ENCODE measurements at regions of chr7 and their contacts with region 1.

Region 1: DNA sequence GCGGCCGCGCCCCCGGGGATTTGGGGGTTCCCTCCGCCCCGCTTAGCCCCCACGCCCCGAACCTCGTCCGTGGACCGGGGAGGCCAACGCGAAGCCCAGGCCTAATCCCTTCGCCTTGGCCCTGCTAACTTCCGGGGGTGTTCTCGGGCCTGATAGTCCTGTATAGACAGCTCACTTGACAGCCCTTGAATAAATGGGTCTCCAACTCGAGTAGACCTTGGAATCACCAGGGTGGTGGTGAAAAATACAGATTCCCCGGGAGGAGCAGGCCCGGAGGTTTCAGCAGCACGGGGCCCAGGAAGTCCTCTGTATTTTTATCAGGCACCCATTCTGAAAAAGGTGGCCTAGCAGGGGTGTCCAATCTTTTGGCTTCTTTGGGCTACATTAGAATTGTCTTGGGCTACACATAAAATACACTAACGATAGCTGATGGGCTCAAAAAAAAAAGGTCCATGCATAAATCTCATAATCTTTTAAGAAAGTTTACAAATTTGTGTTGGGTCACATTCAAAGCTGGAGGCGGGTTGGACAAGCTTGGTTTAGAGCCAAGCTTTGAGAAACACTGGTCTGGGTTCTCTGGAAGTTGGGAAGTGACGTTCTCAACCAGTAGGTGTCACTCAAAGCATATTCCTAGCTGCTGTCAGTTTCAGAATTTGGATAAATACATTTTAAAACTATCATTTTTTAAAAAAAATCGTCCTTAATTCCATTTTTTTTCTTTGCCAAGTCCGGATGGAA is 221.7 kb downstream of the PHTF2 start:
- DNase-seq: peak; percentile 78
- H3K4me3 Mint-ChIP-seq: peak overlapping the region; percentile 67
- H3K27ac Mint-ChIP-seq: no peak overlapping the region
- H3K4me1 Mint-ChIP-seq: peaks cover 5% of the 10 kb centered on the region
- H3K27me3 Mint-ChIP-seq: peaks cover 31% of the 10 kb centered on the region
- CTCF ChIP-seq: peak; percentile 71

Region 2: GRCh38 chr7:77714195-77714594 is 306.1 kb before region 1 on chr7:
- CTCF ChIA-PET with region 1: no interaction called
- POLR2A ChIA-PET with region 1: no interaction called
- intact Hi-C with region 1: no loop called
- DNase-seq: no peak
- H3K4me3 Mint-ChIP-seq: no peak overlapping the region
- H3K27ac Mint-ChIP-seq: no peak overlapping the region
- H3K4me1 Mint-ChIP-seq: peaks cover 15% of the 10 kb centered on the region
- H3K27me3 Mint-ChIP-seq: no peaks in the 10 kb centered on the region
- CTCF ChIP-seq: no peak

Region 3: GRCh38 chr7:77940647-77941046 is 79.7 kb before region 1 on chr7:
- CTCF ChIA-PET with region 1: interaction called, 4 read pairs
- POLR2A ChIA-PET with region 1: no interaction called
- intact Hi-C with region 1: loop called (anchors 5 kb)
- DNase-seq: peak; percentile 44
- H3K4me3 Mint-ChIP-seq: no peak overlapping the region
- H3K27ac Mint-ChIP-seq: no peak overlapping the region
- H3K4me1 Mint-ChIP-seq: no peaks in the 10 kb centered on the region
- H3K27me3 Mint-ChIP-seq: no peaks in the 10 kb centered on the region
- CTCF ChIP-seq: peak; percentile 66

Region 4: DNA sequence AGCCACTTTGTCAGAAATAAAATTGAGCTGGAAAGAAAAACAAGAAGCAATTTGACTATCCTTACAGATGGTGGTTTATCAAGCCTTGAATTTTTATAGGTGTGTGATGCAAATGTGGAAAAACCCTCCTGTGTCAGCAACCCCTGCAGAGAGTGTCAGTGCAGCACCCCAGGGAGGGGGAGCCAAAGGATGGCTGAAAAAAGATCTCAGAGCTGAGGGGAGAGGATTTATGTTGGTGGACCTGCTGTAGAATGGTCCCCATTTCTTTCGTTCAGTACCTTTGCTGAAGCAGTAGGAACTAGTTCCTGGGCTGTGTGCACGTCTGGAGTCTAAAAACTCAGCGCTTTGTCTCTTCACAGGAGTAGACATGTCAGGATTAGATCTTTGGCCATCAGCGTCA is 17.3 kb after region 1 on chr7:
- CTCF ChIA-PET with region 1: interaction called, 15 read pairs
- POLR2A ChIA-PET with region 1: no interaction called
- intact Hi-C with region 1: no loop called
- DNase-seq: no peak
- H3K4me3 Mint-ChIP-seq: no peak overlapping the region
- H3K27ac Mint-ChIP-seq: no peak overlapping the region
- H3K4me1 Mint-ChIP-seq: no peaks in the 10 kb centered on the region
- H3K27me3 Mint-ChIP-seq: peaks cover 69% of the 10 kb centered on the region
- CTCF ChIP-seq: no peak

Region 5: GRCh38 chr7:78141522-78142281 is 121.4 kb after region 1 on chr7:
- CTCF ChIA-PET with region 1: no interaction called
- POLR2A ChIA-PET with region 1: no interaction called
- intact Hi-C with region 1: no loop called
- DNase-seq: no peak
- H3K4me3 Mint-ChIP-seq: no peak overlapping the region
- H3K27ac Mint-ChIP-seq: no peak overlapping the region
- H3K4me1 Mint-ChIP-seq: no peaks in the 10 kb centered on the region
- H3K27me3 Mint-ChIP-seq: peaks cover 88% of the 10 kb centered on the region
- CTCF ChIP-seq: no peak

Region 6: DNA sequence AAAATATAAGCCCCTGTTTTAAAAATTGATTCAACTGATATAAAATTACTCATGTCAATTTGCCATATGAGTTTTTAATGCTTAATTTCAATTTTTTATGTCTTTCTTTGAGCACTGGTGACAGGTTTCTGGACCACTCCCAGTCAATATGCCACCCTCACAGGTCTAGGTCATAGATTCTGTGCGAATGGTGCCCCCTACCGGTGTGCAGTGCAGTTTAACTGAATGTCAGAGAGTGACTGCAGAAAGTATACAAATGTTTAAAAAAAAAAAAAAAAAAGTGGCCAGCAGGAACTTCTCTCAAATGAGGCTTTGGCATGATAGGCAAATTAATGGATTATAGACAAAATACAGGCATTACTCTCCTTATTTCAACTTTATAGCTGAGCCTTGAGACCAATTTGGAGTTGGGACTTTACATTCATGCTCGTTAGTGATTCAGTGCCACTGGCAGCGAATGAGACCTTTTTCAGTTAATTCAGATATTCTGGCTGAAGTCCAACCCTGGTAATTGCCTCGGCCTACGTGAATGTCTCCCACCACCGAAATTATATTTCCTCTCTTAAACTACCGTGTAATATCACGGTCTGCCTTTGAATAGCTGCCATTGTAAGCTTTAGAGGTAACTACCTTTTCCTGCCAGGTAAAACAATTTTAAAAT is 205.9 kb after region 1 on chr7:
- CTCF ChIA-PET with region 1: interaction called, 5 read pairs
- POLR2A ChIA-PET with region 1: no interaction called
- intact Hi-C with region 1: loop called (anchors 2 kb)
- DNase-seq: peak; percentile 50
- H3K4me3 Mint-ChIP-seq: no peak overlapping the region
- H3K27ac Mint-ChIP-seq: no peak overlapping the region
- H3K4me1 Mint-ChIP-seq: no peaks in the 10 kb centered on the region
- H3K27me3 Mint-ChIP-seq: peaks cover 44% of the 10 kb centered on the region
- CTCF ChIP-seq: peak; percentile 50

Region 7: DNA sequence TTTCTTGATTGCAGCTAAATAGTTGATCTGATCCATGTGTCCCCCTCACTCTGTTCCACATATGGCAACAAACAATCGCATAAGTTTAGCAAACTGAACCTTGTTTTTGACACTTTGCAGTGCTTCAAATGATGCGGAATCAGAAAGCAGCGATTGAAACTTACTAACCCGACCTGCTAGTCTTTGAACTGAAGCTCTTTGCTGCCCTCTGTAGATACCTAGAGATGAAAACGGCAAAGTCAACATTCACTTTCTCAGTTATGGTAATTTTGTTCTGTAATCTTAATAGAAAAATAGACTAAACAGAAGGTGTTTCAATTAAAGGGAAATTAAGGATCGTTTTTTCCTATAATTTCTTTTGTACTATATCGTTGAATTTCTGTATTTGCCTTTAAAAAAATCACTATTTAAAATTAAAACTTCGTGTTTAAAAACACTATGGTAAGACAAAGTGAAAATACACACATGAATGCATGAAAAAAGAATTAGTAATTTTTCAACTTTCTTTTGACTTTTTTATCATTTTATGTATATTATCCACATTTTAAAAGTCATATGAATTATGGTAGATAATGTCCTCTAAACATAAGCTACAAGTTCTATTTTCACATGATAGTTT is 1156.7 kb after region 1 on chr7:
- CTCF ChIA-PET with region 1: interaction called, 3 read pairs
- POLR2A ChIA-PET with region 1: no interaction called
- intact Hi-C with region 1: loop called (anchors 10 kb)
- DNase-seq: peak; percentile 49
- H3K4me3 Mint-ChIP-seq: no peak overlapping the region
- H3K27ac Mint-ChIP-seq: no peak overlapping the region
- H3K4me1 Mint-ChIP-seq: no peaks in the 10 kb centered on the region
- H3K27me3 Mint-ChIP-seq: peaks cover 70% of the 10 kb centered on the region
- CTCF ChIP-seq: peak; percentile 56